PC-9 (cell line): ENCODE measurements at regions of chr5 and their contacts with region 1.

Region 1: DNA sequence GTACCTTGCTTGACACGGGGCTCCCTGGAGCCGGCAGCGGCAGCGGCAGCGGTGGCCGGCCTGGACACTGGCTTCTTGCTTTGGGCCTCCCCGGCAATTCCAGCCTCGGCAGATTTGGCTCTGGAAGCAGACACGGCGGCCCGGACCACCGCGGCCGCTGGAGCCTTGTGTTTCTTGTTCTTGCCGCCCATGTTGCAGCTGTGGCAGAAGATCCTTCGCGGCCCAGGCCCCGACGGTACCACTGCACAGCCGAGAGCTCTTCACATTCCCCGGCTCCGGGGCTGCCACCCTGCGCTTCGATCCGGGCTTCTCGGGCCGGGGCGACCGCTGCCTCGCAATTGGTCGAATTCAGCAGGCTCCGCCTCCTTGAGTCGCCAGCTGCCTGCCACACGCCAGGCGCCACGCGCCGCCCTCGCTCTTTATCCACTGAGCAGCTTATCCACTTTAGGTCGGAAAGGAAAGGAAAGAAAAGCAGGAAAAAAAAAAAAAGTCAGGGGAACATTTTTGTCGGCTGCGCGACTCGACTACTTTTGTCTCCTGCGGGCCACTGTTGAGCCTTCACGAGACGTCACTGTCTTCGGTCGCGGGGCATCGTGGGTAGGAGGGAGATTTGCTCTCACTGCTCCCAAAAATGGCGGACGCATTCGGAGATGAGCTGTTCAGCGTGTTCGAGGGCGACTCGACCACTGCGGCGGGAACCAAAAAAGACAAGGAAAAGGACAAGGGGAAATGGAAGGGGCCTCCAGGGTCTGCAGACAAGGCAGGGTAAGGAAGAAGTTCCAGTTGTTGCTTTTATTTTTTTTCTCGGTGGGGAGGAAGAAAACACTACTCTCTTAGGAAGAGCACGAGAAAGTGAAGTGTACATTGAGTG is at the starts of genes DHX29 and MTREX:
- DNase-seq: peak; percentile 82 to 88
- H3K4me3 ChIP-seq: peak within 1 kb of the TSS; percentile 96
- H3K27ac ChIP-seq: peak within 1 kb of the TSS; percentile 85
- H3K4me1 ChIP-seq: peaks cover 40% of the 10 kb centered on the region
- H3K27me3 ChIP-seq: no peaks in the 10 kb centered on the region
- CTCF ChIP-seq: no peak
- total RNA-seq, gene DHX29: 11.1 and 16.5 TPM in 2 replicates
- total RNA-seq, gene MTREX: 51.7 and 56.7 TPM in 2 replicates

Region 2: GRCh38 chr5:55232985-55233928 is 74.4 kb before region 1 on chr5 and contains the start of gene CCNO:
- CTCF ChIA-PET with region 1: interaction called, 5 read pairs
- POLR2A ChIA-PET with region 1: interaction called, 7 read pairs
- intact Hi-C with region 1: loop called (anchors 2 kb)
- DNase-seq: peak; percentile 81 to 86
- H3K4me3 ChIP-seq: peak within 1 kb of the TSS; percentile 89
- H3K27ac ChIP-seq: peak within 1 kb of the TSS; percentile 38
- H3K4me1 ChIP-seq: peaks cover 22% of the 10 kb centered on the region
- H3K27me3 ChIP-seq: no peaks in the 10 kb centered on the region
- CTCF ChIP-seq: no peak
- total RNA-seq, gene CCNO: 4.7 and 7.1 TPM in 2 replicates

Region 3: GRCh38 chr5:55319491-55319890 is 11.9 kb after region 1 on chr5:
- CTCF ChIA-PET with region 1: no interaction called
- POLR2A ChIA-PET with region 1: no interaction called
- intact Hi-C with region 1: no loop called
- DNase-seq: no peak
- H3K4me3 ChIP-seq: no peak overlapping the region
- H3K27ac ChIP-seq: no peak overlapping the region
- H3K4me1 ChIP-seq: no peaks in the 10 kb centered on the region
- H3K27me3 ChIP-seq: no peaks in the 10 kb centered on the region
- CTCF ChIP-seq: no peak

Region 4: DNA sequence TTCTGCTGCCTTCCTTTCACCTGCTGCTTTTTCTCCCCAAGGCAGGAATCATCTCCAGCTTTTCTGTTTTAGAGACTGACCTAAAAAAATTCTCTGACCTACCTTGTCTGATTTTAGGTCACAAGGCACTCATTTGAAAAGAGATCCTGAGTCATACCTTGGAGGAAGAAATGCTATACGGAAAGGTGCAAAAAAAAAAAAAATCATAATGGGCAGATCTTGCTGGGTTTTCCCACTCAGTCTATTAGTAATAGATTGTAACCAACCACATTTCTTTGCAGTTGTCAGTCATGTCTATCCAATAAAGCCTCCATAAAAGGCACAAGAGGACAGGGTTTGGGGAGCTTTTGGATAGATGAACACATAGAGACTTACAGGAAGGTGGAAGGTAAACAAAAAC is 70.2 kb after region 1 on chr5:
- CTCF ChIA-PET with region 1: no interaction called
- POLR2A ChIA-PET with region 1: no interaction called
- intact Hi-C with region 1: no loop called
- DNase-seq: no peak
- H3K4me3 ChIP-seq: no peak overlapping the region
- H3K27ac ChIP-seq: no peak overlapping the region
- H3K4me1 ChIP-seq: no peaks in the 10 kb centered on the region
- H3K27me3 ChIP-seq: no peaks in the 10 kb centered on the region
- CTCF ChIP-seq: no peak

Region 5: GRCh38 chr5:55485073-55485472 is 177.5 kb after region 1 on chr5:
- CTCF ChIA-PET with region 1: no interaction called
- POLR2A ChIA-PET with region 1: no interaction called
- intact Hi-C with region 1: no loop called
- DNase-seq: no peak
- H3K4me3 ChIP-seq: no peak overlapping the region
- H3K27ac ChIP-seq: no peak overlapping the region
- H3K4me1 ChIP-seq: no peaks in the 10 kb centered on the region
- H3K27me3 ChIP-seq: no peaks in the 10 kb centered on the region
- CTCF ChIP-seq: no peak